ENCODE measurements at regions of chr1 and their contacts with region 1.

Region 1: GRCh38 chr1:248807067-248807737 is 18.5 kb downstream of the SH3BP5L start:
- DNase-seq: peak; percentile 79
- H3K4me3 ChIP-seq: no peak overlapping the region
- H3K27ac ChIP-seq: no peak overlapping the region
- H3K4me1 ChIP-seq: peaks cover 0 to 9% of the 10 kb centered on the region in 2 experiments; a peak in 1 of 4 replicates
- H3K27me3 ChIP-seq: peaks cover 5% of the 10 kb centered on the region; the same call in 1 of the 2 replicates
- CTCF ChIP-seq: peak; percentile 82
- EP300 ChIP-seq: no peak
- RAD21 ChIP-seq: peak; percentile 93

Region 2: GRCh38 chr1:248611883-248612414 is 195.3 kb before region 1 on chr1:
- CTCF ChIA-PET with region 1: interaction called, 29 read pairs
- POLR2A ChIA-PET with region 1: no interaction called
- DNase-seq: no peak
- H3K4me3 ChIP-seq: no peak overlapping the region
- H3K27ac ChIP-seq: no peak overlapping the region
- H3K4me1 ChIP-seq: no peaks in the 10 kb centered on the region
- H3K27me3 ChIP-seq: peaks cover 9% of the 10 kb centered on the region; the same call in 1 of the 2 replicates
- CTCF ChIP-seq: no peak
- EP300 ChIP-seq: no peak
- RAD21 ChIP-seq: no peak

Region 3: DNA sequence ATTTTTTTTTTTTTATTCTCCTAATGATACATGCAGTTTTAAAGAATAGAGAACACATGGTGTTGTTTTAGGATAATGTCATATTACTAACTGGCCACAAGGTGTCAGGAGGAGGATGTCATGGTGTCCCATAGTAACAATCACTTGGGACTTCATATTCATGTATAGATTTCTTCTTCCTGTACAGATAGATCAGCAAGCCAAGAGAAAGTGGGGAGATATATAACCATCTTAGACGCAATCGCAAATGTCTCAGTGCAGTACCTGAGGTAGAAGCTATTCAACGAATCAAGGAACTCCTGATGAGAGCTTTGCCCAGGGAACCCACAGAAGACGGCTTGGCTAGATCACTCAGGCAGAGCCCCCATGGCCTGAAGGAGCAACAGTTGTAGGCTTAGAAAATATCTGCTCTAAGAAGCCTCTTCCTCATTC is 184.6 kb before region 1 on chr1:
- CTCF ChIA-PET with region 1: interaction called, 122 read pairs
- POLR2A ChIA-PET with region 1: no interaction called
- DNase-seq: peak; percentile 35
- H3K4me3 ChIP-seq: no peak overlapping the region
- H3K27ac ChIP-seq: no peak overlapping the region
- H3K4me1 ChIP-seq: no peaks in the 10 kb centered on the region
- H3K27me3 ChIP-seq: peaks cover 4% of the 10 kb centered on the region; the same call in 1 of the 2 replicates
- CTCF ChIP-seq: peak; percentile 69
- EP300 ChIP-seq: no peak
- RAD21 ChIP-seq: peak; percentile 65

Region 4: DNA sequence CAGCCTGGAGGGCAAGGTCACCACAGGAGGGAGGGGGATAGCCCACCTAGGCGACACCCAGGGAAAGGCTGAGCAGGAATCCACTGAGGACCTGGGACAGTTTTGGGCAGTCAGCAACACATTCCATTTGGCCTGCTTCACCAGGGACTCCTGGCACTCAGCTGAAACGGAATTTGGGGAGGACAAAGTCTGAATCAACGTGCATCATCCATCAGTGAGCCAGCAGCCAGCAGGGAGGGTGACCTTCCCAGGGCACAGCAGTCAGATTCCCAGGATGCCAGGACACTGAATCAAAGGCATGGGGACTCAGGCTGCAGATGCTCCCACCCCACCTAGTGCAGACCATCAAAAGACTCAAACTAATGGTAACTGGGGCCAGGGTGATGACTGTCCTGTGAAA is 13.9 kb after region 1 on chr1:
- CTCF ChIA-PET with region 1: interaction called, 24 read pairs
- POLR2A ChIA-PET with region 1: no interaction called
- DNase-seq: peak; percentile 13
- H3K4me3 ChIP-seq: peak overlapping the region in 1 of 2 experiments; percentile 22; a peak in 1 of 4 replicates
- H3K27ac ChIP-seq: peak overlapping the region; percentile 17 to 92; a peak in 3 of 4 replicates
- H3K4me1 ChIP-seq: peaks cover 33 to 41% of the 10 kb centered on the region in 2 experiments
- H3K27me3 ChIP-seq: no peaks in the 10 kb centered on the region
- CTCF ChIP-seq: no peak
- EP300 ChIP-seq: peak in 1 of 2 experiments; percentile 88; a peak in 1 of 4 replicates
- RAD21 ChIP-seq: no peak

Measured in SK-N-SH (cell line).